Calu3 (cell line): ENCODE measurements at regions of chr6 and their contacts with region 1.

Region 1: GRCh38 chr6:72411872-72412708 is 209.8 kb upstream of the KCNQ5 start:
- DNase-seq: peak; percentile 80
- H3K4me3 Mint-ChIP-seq: no peak overlapping the region
- H3K27ac Mint-ChIP-seq: no peak overlapping the region
- H3K4me1 Mint-ChIP-seq: no peaks in the 10 kb centered on the region
- H3K27me3 Mint-ChIP-seq: no peaks in the 10 kb centered on the region
- CTCF ChIP-seq: peak; percentile 100

Region 2: GRCh38 chr6:71533939-71534379 is 878.1 kb before region 1 on chr6:
- CTCF ChIA-PET with region 1: interaction called, 5 read pairs
- intact Hi-C with region 1: loop called (anchors 1 kb)
- DNase-seq: peak; percentile 49
- H3K4me3 Mint-ChIP-seq: no peak overlapping the region
- H3K27ac Mint-ChIP-seq: no peak overlapping the region
- H3K4me1 Mint-ChIP-seq: peaks cover 53% of the 10 kb centered on the region
- H3K27me3 Mint-ChIP-seq: no peaks in the 10 kb centered on the region
- CTCF ChIP-seq: peak; percentile 77

Region 3: GRCh38 chr6:72140795-72141194 is 271.3 kb before region 1 on chr6:
- CTCF ChIA-PET with region 1: interaction called, 3 read pairs
- intact Hi-C with region 1: loop called (anchors 2 kb)
- DNase-seq: no peak
- H3K4me3 Mint-ChIP-seq: no peak overlapping the region
- H3K27ac Mint-ChIP-seq: no peak overlapping the region
- H3K4me1 Mint-ChIP-seq: no peaks in the 10 kb centered on the region
- H3K27me3 Mint-ChIP-seq: no peaks in the 10 kb centered on the region
- CTCF ChIP-seq: no peak

Region 4: GRCh38 chr6:72296375-72296774 is 115.7 kb before region 1 on chr6:
- CTCF ChIA-PET with region 1: no interaction called
- intact Hi-C with region 1: no loop called
- DNase-seq: no peak
- H3K4me3 Mint-ChIP-seq: no peak overlapping the region
- H3K27ac Mint-ChIP-seq: no peak overlapping the region
- H3K4me1 Mint-ChIP-seq: no peaks in the 10 kb centered on the region
- H3K27me3 Mint-ChIP-seq: no peaks in the 10 kb centered on the region
- CTCF ChIP-seq: no peak

Region 5: DNA sequence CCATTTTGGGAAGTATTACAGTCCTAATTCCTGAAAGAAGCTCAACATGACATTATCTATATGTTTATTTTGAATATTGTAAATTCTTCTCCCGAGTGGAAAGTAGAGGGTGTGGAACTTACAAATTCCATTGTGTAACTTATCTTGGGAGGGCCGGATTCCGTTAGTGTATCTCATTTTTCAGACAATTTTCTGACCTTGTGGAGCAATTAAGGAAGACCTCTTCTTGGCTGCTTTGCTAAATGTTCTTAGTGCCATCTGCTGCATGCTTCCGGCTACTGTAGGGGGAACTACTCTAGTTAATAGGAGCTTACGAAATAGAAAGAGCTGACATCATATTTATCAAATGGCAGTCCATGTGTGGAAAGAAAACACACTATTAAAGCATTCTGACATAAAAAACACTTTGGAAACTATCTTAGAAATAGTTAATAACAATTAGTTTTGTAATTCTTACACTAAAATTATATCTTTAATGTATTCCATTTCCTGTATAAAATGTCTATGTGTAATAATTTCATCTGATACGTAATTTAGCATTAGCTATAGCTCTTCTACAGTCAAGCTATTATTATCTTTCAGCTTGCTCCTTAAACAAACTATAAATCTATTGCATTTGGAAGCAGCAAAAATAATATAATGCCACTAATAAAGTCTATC is 168.3 kb after region 1 on chr6:
- CTCF ChIA-PET with region 1: interaction called, 66 read pairs
- intact Hi-C with region 1: loop called (anchors 5 kb)
- DNase-seq: peak; percentile 44
- H3K4me3 Mint-ChIP-seq: no peak overlapping the region
- H3K27ac Mint-ChIP-seq: no peak overlapping the region
- H3K4me1 Mint-ChIP-seq: no peaks in the 10 kb centered on the region
- H3K27me3 Mint-ChIP-seq: no peaks in the 10 kb centered on the region
- CTCF ChIP-seq: peak; percentile 43

Region 6: GRCh38 chr6:73180763-73181619 is 768.9 kb after region 1 on chr6:
- CTCF ChIA-PET with region 1: no interaction called
- intact Hi-C with region 1: loop called (anchors 1 kb)
- DNase-seq: peak; percentile 26
- H3K4me3 Mint-ChIP-seq: peak overlapping the region; percentile 41
- H3K27ac Mint-ChIP-seq: no peak overlapping the region
- H3K4me1 Mint-ChIP-seq: no peaks in the 10 kb centered on the region
- H3K27me3 Mint-ChIP-seq: peaks cover 26% of the 10 kb centered on the region
- CTCF ChIP-seq: peak; percentile 58